Prostate gland (tissue), 2 donors: ENCODE measurements at regions of chr6 and their contacts with region 1.

Region 1: GRCh38 chr6:20126789-20127653 is 85.2 kb downstream of the MBOAT1 start:
- DNase-seq: peak; percentile 48
- H3K4me3 ChIP-seq: no peak overlapping the region
- H3K27ac ChIP-seq: peak overlapping the region; percentile 39 to 44
- H3K4me1 ChIP-seq: no peaks in the 10 kb centered on the region
- H3K27me3 ChIP-seq: no peaks in the 10 kb centered on the region
- CTCF ChIP-seq: peak; percentile 52 to 86 (median 80)
- POLR2A ChIP-seq: no peak

Region 2: GRCh38 chr6:18253635-18254034 is 1873.4 kb before region 1 on chr6:
- intact Hi-C with region 1: no loop called
- DNase-seq: no peak
- H3K4me3 ChIP-seq: no peak overlapping the region
- H3K27ac ChIP-seq: no peak overlapping the region
- H3K4me1 ChIP-seq: no peaks in the 10 kb centered on the region
- H3K27me3 ChIP-seq: no peaks in the 10 kb centered on the region
- CTCF ChIP-seq: no peak
- POLR2A ChIP-seq: no peak

Region 3: DNA sequence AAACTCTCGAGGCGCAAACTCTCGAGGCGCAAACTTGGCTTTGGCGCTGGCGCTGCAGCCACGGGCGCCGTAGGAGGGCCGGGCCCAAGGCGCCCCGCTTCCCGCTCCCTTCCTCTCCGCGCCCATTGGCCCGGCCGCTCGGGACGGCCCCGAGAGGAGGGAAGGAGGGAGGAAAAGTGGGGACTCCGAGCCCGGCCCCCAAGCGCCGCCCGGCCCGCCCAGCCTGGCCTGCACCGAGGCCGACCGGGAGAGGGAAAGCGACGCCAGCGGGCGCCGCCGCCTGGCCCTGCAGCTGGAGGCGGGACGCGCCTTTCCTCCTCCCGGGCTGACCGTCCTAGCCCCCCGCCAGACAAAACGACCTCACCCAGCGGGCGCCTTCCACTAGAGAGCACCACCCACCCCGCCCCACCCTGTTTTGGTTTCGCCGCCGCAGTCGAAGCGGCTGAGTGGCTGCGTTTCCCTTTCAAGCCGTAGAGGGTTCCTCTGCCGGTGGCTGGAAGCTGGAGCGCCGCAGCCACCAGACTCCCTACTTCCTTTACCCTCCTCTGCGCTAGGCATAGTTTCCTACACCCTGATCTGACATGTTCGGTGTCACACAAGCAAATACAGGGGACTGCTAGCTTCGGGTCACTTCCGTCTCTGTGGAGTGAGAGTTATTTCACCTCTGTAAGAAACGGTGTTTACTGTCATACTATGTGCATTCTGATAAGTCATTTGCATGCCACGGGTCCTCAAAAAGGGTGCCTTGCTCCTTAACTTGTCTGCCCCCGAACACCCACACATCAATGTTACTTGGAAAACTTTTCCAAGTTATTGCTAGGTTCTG is 85.6 kb after region 1 on chr6 and contains the start of gene MBOAT1:
- intact Hi-C with region 1: loop called (anchors 2 kb)
- DNase-seq: peak; percentile 89
- H3K4me3 ChIP-seq: peak within 1 kb of the TSS; percentile 68 to 78
- H3K27ac ChIP-seq: peak within 1 kb of the TSS; percentile 92 to 94
- H3K4me1 ChIP-seq: no peaks in the 10 kb centered on the region
- H3K27me3 ChIP-seq: no peaks in the 10 kb centered on the region
- CTCF ChIP-seq: peak in 3 of 4 experiments; percentile 7 to 48 (median 16)
- POLR2A ChIP-seq: peak; percentile 81
- total RNA-seq, gene MBOAT1: 8.6 to 14.1 TPM